Activated CD4-positive, alpha-beta T cell treated with anti-CD3 and anti-CD28 coated beads for 36 hours (primary cell): ENCODE measurements at regions of chr17 and their contacts with region 1.

Region 1: GRCh38 chr17:79991140-79991923 is 44.3 kb downstream of the TBC1D16 start:
- DNase-seq: peak; percentile 93
- ATAC-seq: peak; percentile 77
- H3K4me3 Mint-ChIP-seq: peak overlapping the region; percentile 75
- H3K27ac Mint-ChIP-seq: peak overlapping the region; percentile 14
- H3K4me1 Mint-ChIP-seq: peaks cover 41% of the 10 kb centered on the region
- H3K27me3 Mint-ChIP-seq: no peaks in the 10 kb centered on the region

Region 2: DNA sequence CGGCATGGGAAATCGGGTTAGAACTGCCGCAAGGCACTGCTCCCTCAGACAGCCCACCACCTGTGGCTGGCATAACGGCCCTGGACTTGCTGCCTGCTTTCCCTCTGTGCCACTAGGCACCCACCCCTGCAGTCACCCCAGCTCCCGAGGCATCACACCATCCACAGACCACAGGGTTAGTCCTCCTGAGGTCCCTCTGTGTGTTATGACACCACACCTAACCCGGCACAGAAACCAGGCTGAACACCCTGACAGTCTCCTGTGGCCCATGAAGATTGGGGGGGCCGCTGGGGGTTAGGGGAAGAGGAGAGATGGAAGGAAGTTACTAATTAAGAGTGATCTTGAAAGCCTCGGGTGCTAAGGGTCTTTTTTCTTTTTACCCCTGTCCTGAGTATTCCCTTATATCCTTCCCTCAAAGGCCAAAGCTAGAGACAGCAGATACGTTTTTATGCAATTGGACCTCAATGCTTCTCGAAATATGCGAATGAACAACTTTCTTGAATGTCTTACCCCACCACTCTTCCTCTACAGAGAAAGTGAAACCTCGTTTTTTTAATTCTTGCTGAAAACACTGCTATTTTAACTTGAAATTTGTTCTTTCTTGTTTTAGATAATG is 1216.3 kb before region 1 on chr17:
- CTCF ChIA-PET with region 1: no interaction called
- POLR2A ChIA-PET with region 1: no interaction called
- intact Hi-C with region 1: loop called in 1 of 2 experiments (anchors 10 kb)
- DNase-seq: peak; percentile 86
- ATAC-seq: peak; percentile 67
- H3K4me3 Mint-ChIP-seq: peak overlapping the region; percentile 84
- H3K27ac Mint-ChIP-seq: peak overlapping the region; percentile 100
- H3K4me1 Mint-ChIP-seq: peaks cover 68% of the 10 kb centered on the region
- H3K27me3 Mint-ChIP-seq: no peaks in the 10 kb centered on the region

Region 3: DNA sequence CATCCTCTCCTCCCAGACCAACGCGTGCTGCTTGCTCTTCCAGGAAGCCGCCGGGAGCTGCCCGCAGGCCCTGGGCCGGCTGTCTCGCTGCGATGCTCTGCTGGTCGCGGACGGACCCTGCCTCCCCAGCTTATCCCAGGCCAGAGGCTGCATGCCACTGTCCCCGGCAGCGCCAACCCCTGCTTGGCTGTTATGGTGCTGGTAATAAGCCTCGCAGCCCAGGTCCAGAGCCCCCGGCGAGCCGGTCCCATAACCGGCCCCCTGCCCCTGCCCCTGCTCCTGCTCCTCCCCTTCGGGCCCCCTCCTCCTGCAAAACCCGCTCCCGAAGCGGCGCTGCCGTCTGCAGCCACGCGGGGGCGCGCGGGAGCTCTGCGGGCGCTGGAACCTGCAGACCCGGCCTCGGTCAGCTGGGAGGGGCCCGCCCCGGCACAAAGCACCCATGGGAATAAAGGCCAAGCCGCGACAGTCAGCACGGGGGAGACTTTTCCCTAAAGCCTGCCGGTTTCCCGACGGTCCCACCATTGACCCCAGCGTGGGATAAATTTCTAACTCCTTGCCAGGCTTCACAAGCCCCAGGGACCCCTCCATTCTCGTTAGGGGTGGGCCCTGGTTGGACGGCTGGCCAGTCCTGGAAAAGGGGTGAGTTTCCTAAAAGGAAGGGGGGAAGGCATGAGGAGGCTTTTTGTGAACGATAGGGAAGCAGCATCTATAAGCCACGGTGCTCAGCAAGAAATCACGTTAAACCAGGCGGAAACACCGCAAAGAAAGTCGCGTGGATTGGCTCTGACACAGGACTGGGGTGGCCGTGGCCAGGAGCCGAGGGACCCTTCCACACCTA is 249.4 kb before region 1 on chr17:
- CTCF ChIA-PET with region 1: interaction called, 8 read pairs
- POLR2A ChIA-PET with region 1: no interaction called
- intact Hi-C with region 1: loop called (anchors 1 to 5 kb)
- DNase-seq: peak; percentile 84
- ATAC-seq: peak; percentile 63
- H3K4me3 Mint-ChIP-seq: no peak overlapping the region
- H3K27ac Mint-ChIP-seq: no peak overlapping the region
- H3K4me1 Mint-ChIP-seq: peaks cover 13% of the 10 kb centered on the region
- H3K27me3 Mint-ChIP-seq: peaks cover 31% of the 10 kb centered on the region

Region 4: DNA sequence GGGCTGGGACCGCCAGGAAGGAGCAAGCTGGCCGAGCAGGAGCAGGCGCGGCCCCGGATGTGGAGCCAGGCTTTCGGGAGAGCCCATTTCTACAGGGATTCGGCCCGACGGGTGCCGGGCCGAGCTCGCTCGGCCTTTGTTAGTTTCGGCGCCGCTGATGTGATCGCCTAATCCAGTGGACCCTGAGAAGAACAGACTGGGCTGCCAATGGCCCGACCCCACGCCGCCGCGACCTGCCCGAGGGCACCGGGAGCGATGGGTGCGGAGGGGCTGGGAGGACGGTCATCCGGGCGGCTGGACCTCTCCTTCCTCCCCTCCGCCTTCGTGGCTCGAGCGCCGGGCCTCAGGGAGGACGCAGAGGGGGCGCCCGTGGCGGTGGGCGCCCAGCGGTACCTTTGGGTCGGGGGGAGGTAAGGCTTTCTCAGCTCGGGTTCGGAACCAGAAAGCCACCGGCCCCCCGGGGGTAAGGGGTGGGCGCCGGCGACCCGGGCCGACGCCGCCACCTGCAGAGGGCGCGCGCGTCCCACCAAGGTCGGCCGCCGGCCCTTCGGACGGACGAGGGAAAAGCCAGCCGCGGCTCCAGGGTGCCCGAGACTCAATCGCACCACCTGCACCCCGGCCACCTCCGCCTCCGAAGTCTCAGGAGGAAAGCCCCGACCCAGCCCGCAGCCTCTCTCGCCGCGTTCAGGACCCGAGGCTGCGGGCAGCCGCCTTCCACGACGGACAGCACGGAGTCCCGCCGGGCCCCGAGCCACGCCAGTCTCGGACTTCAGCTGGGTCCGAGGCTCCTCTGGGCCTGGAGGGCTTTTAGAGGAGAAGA is 201.6 kb before region 1 on chr17:
- CTCF ChIA-PET with region 1: interaction called, 5 read pairs
- POLR2A ChIA-PET with region 1: no interaction called
- intact Hi-C with region 1: loop called (anchors 1 to 2 kb)
- DNase-seq: peak; percentile 56
- ATAC-seq: peak; percentile 33
- H3K4me3 Mint-ChIP-seq: no peak overlapping the region
- H3K27ac Mint-ChIP-seq: no peak overlapping the region
- H3K4me1 Mint-ChIP-seq: peaks cover 4% of the 10 kb centered on the region
- H3K27me3 Mint-ChIP-seq: peaks cover 49% of the 10 kb centered on the region

Region 5: DNA sequence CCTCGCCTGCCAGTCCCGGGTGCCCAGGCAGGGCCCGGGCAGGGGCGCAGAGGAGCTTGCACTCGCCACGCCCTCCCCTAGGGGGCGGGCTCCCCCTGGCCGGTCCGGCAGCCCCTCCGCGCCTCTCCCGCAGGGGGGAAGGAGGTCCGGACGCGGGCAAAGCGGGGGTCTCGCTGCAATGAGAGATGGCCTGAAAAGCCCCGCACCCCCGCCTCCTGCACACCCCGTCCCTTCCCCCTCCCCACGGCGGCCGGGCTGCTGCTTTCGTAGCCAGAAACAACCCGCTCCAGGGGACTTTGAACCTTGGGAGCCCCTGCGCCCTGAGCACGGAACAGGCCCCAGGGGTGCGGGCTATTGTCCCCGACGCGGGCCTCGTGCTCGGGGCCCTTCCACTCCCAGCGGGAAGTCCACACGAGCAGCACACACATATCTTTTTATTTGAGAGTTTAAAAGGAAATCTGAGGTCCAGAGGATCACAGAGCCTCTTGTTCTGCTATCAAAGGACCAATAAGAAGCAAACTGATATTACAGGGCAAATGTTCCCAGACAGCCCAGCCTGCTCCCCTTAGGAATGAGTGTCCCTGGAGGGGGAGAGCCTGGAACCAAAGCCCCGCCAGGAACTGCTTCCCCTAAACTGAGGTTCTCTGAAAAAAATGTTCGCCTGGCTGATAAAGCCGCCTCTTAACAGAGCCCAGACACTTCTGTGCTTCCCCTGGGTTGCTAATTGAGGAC is 146.3 kb before region 1 on chr17:
- CTCF ChIA-PET with region 1: interaction called, 4 read pairs
- POLR2A ChIA-PET with region 1: no interaction called
- intact Hi-C with region 1: loop called in 1 of 2 experiments (anchors 1 kb)
- DNase-seq: peak; percentile 73
- ATAC-seq: peak; percentile 65
- H3K4me3 Mint-ChIP-seq: no peak overlapping the region
- H3K27ac Mint-ChIP-seq: no peak overlapping the region
- H3K4me1 Mint-ChIP-seq: peaks cover 24% of the 10 kb centered on the region
- H3K27me3 Mint-ChIP-seq: peaks cover 38% of the 10 kb centered on the region

Region 6: DNA sequence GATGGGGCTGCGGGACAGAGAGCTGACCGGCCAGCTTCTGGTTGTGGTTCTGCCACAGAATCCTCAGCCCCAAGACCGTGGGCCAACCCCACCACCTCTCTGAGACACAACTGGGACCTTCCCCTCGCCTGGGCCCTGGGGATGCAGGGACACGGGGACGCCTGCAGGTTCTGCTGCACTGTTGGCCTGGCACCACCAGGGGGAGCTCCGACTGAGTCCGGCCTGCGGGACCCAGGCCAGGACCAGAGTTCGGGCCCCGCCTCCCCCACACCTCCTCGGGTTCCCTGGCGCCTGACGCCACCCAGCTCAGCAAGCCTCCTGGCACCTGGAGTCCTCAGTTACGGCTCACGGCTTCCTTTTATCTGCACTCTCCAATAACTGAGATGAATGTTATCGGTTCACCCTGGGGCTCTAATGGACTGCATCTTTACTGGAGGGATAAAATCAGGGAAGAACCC is 17.1 kb after region 1 on chr17:
- CTCF ChIA-PET with region 1: interaction called, 35 read pairs
- POLR2A ChIA-PET with region 1: no interaction called
- intact Hi-C with region 1: no loop called
- DNase-seq: peak; percentile 91
- ATAC-seq: peak; percentile 95
- H3K4me3 Mint-ChIP-seq: no peak overlapping the region
- H3K27ac Mint-ChIP-seq: no peak overlapping the region
- H3K4me1 Mint-ChIP-seq: peaks cover 9% of the 10 kb centered on the region
- H3K27me3 Mint-ChIP-seq: no peaks in the 10 kb centered on the region